Activated naive CD4-positive, alpha-beta T cell treated with anti-CD3 and anti-CD28 coated beads for 36 hours (primary cell): ENCODE measurements at regions of chr1 and their contacts with region 1.

Region 1: GRCh38 chr1:91511386-91511785 is 10.7 kb downstream of the CDC7 start:
- DNase-seq: no peak
- H3K4me3 Mint-ChIP-seq: no peak overlapping the region
- H3K27ac Mint-ChIP-seq: no peak overlapping the region
- H3K4me1 Mint-ChIP-seq: no peaks in the 10 kb centered on the region
- H3K27me3 Mint-ChIP-seq: no peaks in the 10 kb centered on the region

Region 2: GRCh38 chr1:91523482-91523881 is 12.1 kb after region 1 on chr1:
- CTCF ChIA-PET with region 1: interaction called, 13 read pairs
- intact Hi-C with region 1: no loop called
- DNase-seq: peak; percentile 55
- H3K4me3 Mint-ChIP-seq: no peak overlapping the region
- H3K27ac Mint-ChIP-seq: no peak overlapping the region
- H3K4me1 Mint-ChIP-seq: peaks cover 18% of the 10 kb centered on the region
- H3K27me3 Mint-ChIP-seq: no peaks in the 10 kb centered on the region

Region 3: GRCh38 chr1:91684481-91685196 is 173.3 kb after region 1 on chr1:
- CTCF ChIA-PET with region 1: no interaction called
- intact Hi-C with region 1: no loop called
- DNase-seq: peak; percentile 66
- H3K4me3 Mint-ChIP-seq: peak overlapping the region; percentile 40
- H3K27ac Mint-ChIP-seq: peak overlapping the region; percentile 76
- H3K4me1 Mint-ChIP-seq: peaks cover 20% of the 10 kb centered on the region
- H3K27me3 Mint-ChIP-seq: no peaks in the 10 kb centered on the region

Region 4: DNA sequence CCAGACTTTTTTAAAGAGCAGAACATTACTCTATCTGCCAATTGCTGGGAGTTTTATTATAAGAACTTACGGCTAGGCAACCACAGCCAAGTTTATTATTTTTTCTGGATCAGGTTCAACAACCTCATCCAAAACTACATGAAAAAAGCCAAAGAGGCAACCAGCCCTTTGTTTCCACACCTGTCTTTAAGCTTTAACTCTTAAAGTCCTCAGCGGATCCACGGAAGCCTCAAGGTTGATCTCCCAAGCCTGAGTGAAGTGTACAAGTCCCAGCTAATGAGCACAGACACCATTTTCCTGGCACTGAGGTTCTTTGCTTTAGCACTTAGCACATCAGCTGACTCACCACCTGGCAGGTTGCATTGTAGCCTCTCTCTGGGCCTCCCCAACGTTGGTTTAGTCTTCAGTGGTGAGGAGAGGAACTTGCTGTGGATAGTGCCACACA is 231.5 kb after region 1 on chr1:
- CTCF ChIA-PET with region 1: no interaction called
- intact Hi-C with region 1: no loop called
- DNase-seq: peak; percentile 54
- H3K4me3 Mint-ChIP-seq: no peak overlapping the region
- H3K27ac Mint-ChIP-seq: no peak overlapping the region
- H3K4me1 Mint-ChIP-seq: peaks cover 3% of the 10 kb centered on the region
- H3K27me3 Mint-ChIP-seq: no peaks in the 10 kb centered on the region

Region 5: GRCh38 chr1:92201973-92202372 is 690.6 kb after region 1 on chr1:
- CTCF ChIA-PET with region 1: no interaction called
- intact Hi-C with region 1: no loop called
- DNase-seq: no peak
- H3K4me3 Mint-ChIP-seq: no peak overlapping the region
- H3K27ac Mint-ChIP-seq: peak overlapping the region; percentile 51
- H3K4me1 Mint-ChIP-seq: peaks cover 21% of the 10 kb centered on the region
- H3K27me3 Mint-ChIP-seq: no peaks in the 10 kb centered on the region